ENCODE measurements at regions of chr13 and their contacts with region 1.

Region 1: DNA sequence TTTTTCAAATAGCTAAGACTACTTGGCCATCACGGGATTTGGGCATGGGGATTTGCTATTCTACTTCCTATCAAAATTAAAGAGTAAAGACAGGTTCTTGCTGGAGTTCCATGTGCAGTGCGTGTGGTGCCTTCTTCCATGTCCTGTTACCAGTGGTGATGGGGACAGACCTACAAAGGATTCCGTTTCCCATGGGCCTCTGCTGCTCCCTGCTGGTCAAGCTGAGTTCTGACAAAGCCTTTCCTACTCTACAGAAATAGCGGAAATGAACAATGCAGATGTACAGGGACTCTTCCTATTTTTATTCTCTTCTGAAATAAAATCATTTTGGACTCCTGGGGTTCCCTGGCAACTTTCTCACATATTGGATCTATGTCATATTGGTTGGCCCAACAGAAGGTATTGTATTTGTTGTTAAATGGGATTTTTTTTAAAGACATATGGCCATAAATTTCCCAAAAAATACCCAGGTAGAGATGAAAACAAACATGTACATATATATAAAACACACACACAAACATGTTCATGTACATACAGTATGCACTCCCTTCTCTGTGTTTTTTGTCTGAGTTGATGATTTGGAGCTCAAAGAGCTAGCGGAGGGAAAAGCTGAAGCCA is 90.5 kb upstream of the SLC15A1 start:
- DNase-seq: peak; percentile 20 to 65 (median 48)
- ATAC-seq: peak; percentile 87
- H3K4me3 ChIP-seq: no peak overlapping the region
- H3K4me3 Mint-ChIP-seq: no peak overlapping the region
- H3K27ac ChIP-seq: no peak overlapping the region
- H3K27ac Mint-ChIP-seq: peak overlapping the region in 5 of 9 donors; percentile 13 to 60 (median 46)
- H3K4me1 ChIP-seq: no peaks in the 10 kb centered on the region
- H3K4me1 Mint-ChIP-seq: peaks cover 0 to 12% (median 9%) of the 10 kb centered on the region in 7 donors
- H3K27me3 ChIP-seq: no peaks in the 10 kb centered on the region
- H3K27me3 Mint-ChIP-seq: no peaks in the 10 kb centered on the region

Region 2: GRCh38 chr13:97855570-97856303 is 987.2 kb before region 1 on chr13:
- CTCF ChIA-PET with region 1: no interaction called
- POLR2A ChIA-PET with region 1: no interaction called
- intact Hi-C with region 1: loop called in 1 of 2 experiments (anchors 5 kb)
- DNase-seq: peak in 4 of 9 donors; percentile 6 to 22 (median 16)
- ATAC-seq: peak; percentile 45
- H3K4me3 ChIP-seq: no peak overlapping the region
- H3K4me3 Mint-ChIP-seq: no peak overlapping the region
- H3K27ac ChIP-seq: no peak overlapping the region
- H3K27ac Mint-ChIP-seq: no peak overlapping the region
- H3K4me1 ChIP-seq: no peaks in the 10 kb centered on the region
- H3K4me1 Mint-ChIP-seq: peaks cover 0 to 1% (median 0%) of the 10 kb centered on the region in 7 donors
- H3K27me3 ChIP-seq: no peaks in the 10 kb centered on the region
- H3K27me3 Mint-ChIP-seq: peaks cover 5 to 35% (median 21%) of the 10 kb centered on the region in 5 donors

Region 3: GRCh38 chr13:98445340-98446233 is 397.4 kb before region 1 on chr13:
- CTCF ChIA-PET with region 1: no interaction called
- POLR2A ChIA-PET with region 1: no interaction called
- intact Hi-C with region 1: loop called in 1 of 2 experiments (anchors 1 kb)
- DNase-seq: peak; percentile 59 to 82 (median 73)
- ATAC-seq: peak; percentile 95
- H3K4me3 ChIP-seq: no peak overlapping the region
- H3K4me3 Mint-ChIP-seq: peak overlapping the region in 9 of 10 donors; percentile 8 to 76 (median 68)
- H3K27ac ChIP-seq: peak overlapping the region; percentile 58
- H3K27ac Mint-ChIP-seq: peak overlapping the region; percentile 46 to 92 (median 88)
- H3K4me1 ChIP-seq: peaks cover 10 to 15% of the 10 kb centered on the region in 2 donors
- H3K4me1 Mint-ChIP-seq: peaks cover 0 to 23% (median 14%) of the 10 kb centered on the region in 7 donors
- H3K27me3 ChIP-seq: no peaks in the 10 kb centered on the region
- H3K27me3 Mint-ChIP-seq: no peaks in the 10 kb centered on the region

Region 4: GRCh38 chr13:98672944-98673545 is 169.9 kb before region 1 on chr13:
- CTCF ChIA-PET with region 1: no interaction called
- POLR2A ChIA-PET with region 1: no interaction called
- intact Hi-C with region 1: loop called in 1 of 2 experiments (anchors 1 kb)
- DNase-seq: peak in 8 of 9 donors; percentile 16 to 57 (median 40)
- ATAC-seq: peak; percentile 79
- H3K4me3 ChIP-seq: no peak overlapping the region
- H3K4me3 Mint-ChIP-seq: no peak overlapping the region
- H3K27ac ChIP-seq: no peak overlapping the region
- H3K27ac Mint-ChIP-seq: no peak overlapping the region
- H3K4me1 ChIP-seq: no peaks in the 10 kb centered on the region
- H3K4me1 Mint-ChIP-seq: peaks cover 0 to 8% (median 0%) of the 10 kb centered on the region in 7 donors
- H3K27me3 ChIP-seq: no peaks in the 10 kb centered on the region
- H3K27me3 Mint-ChIP-seq: peaks cover 0 to 11% (median 0%) of the 10 kb centered on the region in 5 donors

Region 5: DNA sequence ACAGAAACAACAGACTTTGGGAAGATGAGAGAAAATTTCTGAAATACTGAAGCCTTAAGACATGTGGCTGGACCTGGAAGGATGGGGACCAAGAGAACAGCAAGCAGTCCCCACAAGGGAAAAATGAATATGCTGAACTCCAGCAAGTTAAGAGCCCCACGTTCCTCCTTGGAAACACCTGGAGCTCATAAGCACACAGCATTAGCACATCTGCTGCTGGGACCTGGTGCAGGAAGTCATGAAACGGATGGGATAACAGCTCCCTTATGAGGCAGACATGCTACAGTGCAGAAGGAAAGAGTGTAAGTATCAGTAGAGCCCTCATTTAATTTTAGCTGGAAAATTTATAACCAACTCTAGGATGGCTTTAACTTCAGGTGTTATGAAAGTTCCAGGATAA is 157.8 kb before region 1 on chr13:
- CTCF ChIA-PET with region 1: no interaction called
- POLR2A ChIA-PET with region 1: no interaction called
- intact Hi-C with region 1: loop called in 1 of 2 experiments (anchors 10 kb)
- DNase-seq: no peak
- ATAC-seq: no peak
- H3K4me3 ChIP-seq: no peak overlapping the region
- H3K4me3 Mint-ChIP-seq: no peak overlapping the region
- H3K27ac ChIP-seq: no peak overlapping the region
- H3K27ac Mint-ChIP-seq: no peak overlapping the region
- H3K4me1 ChIP-seq: no peaks in the 10 kb centered on the region
- H3K4me1 Mint-ChIP-seq: no peaks in the 10 kb centered on the region
- H3K27me3 ChIP-seq: no peaks in the 10 kb centered on the region
- H3K27me3 Mint-ChIP-seq: peaks cover 0 to 20% (median 4%) of the 10 kb centered on the region in 5 donors

Region 6: DNA sequence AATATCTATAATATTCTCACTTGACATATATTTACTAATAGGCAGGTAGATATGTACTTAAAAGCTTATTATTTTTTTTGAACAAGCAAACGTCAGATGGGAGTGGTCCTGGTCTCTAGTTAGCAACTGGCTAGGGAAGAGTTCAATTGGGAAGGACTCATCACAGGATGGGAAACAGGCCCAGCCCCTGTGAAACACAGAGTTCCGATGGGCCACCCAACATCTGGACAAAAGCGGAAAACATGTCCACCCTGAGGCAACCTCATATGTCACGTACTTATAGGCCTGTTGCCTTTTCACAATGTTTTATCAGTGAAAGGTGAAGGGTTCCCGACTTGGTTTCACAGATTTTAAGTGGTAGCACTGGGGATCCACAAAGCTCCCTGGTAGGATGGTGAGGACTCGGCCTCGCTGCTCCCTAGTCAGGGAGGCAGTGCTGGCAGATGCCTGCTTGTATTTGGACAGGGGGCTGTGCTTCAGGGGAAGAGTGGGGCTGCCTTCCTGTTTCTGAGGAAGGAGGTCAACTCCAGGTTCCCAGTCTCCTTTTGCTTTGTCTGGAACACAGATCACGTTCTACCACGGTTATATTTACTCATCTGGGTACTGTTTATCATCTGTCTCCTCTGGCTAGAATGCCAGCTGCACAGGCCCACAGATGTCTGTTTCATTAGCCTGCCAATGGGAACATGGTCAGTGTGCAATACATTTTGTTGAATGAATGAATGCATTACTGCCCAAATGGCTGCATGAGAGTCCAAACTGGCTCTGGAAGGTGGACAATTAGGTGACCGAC is 41.2 kb before region 1 on chr13:
- CTCF ChIA-PET with region 1: no interaction called
- POLR2A ChIA-PET with region 1: no interaction called
- intact Hi-C with region 1: no loop called
- DNase-seq: no peak
- ATAC-seq: no peak
- H3K4me3 ChIP-seq: no peak overlapping the region
- H3K4me3 Mint-ChIP-seq: no peak overlapping the region
- H3K27ac ChIP-seq: no peak overlapping the region
- H3K27ac Mint-ChIP-seq: peak overlapping the region in 1 of 9 donors; percentile 72
- H3K4me1 ChIP-seq: no peaks in the 10 kb centered on the region
- H3K4me1 Mint-ChIP-seq: peaks cover 0 to 7% (median 0%) of the 10 kb centered on the region in 7 donors
- H3K27me3 ChIP-seq: no peaks in the 10 kb centered on the region
- H3K27me3 Mint-ChIP-seq: no peaks in the 10 kb centered on the region

Region 7: GRCh38 chr13:99075268-99076191 is 232.6 kb after region 1 on chr13:
- CTCF ChIA-PET with region 1: interaction called, 7 read pairs
- POLR2A ChIA-PET with region 1: no interaction called
- intact Hi-C with region 1: loop called in 1 of 2 experiments (anchors 1 kb)
- DNase-seq: peak in 7 of 9 donors; percentile 29 to 64 (median 55)
- ATAC-seq: peak; percentile 84
- H3K4me3 ChIP-seq: peak overlapping the region; percentile 11
- H3K4me3 Mint-ChIP-seq: peak overlapping the region; percentile 44 to 82 (median 64)
- H3K27ac ChIP-seq: peak overlapping the region; percentile 54
- H3K27ac Mint-ChIP-seq: peak overlapping the region; percentile 75 to 95 (median 89)
- H3K4me1 ChIP-seq: peaks cover 27 to 39% of the 10 kb centered on the region in 2 donors
- H3K4me1 Mint-ChIP-seq: peaks cover 40 to 92% (median 88%) of the 10 kb centered on the region in 7 donors
- H3K27me3 ChIP-seq: no peaks in the 10 kb centered on the region
- H3K27me3 Mint-ChIP-seq: no peaks in the 10 kb centered on the region

Region 8: DNA sequence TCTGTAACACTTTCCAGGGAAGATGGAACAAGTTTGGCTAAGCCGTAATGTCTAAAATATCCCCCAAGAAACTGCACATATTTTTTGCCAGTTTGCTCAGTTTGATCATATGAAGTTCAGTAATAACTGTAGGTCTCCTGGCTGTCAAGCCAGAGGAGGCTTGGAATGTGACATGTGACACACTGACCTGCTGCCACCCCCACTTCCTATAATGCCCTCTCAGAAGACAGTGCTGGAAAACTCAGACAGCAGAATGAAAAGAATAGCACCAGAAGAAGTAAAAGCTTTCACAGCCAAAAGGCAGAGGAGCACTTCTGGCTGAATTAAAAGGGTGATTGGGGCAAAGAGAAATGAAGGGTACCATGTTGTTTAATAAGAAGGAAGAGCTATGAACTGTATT is 290.3 kb after region 1 on chr13:
- CTCF ChIA-PET with region 1: no interaction called
- POLR2A ChIA-PET with region 1: no interaction called
- intact Hi-C with region 1: loop called in 1 of 2 experiments (anchors 1 kb)
- DNase-seq: no peak
- ATAC-seq: no peak
- H3K4me3 ChIP-seq: no peak overlapping the region
- H3K4me3 Mint-ChIP-seq: no peak overlapping the region
- H3K27ac ChIP-seq: no peak overlapping the region
- H3K27ac Mint-ChIP-seq: peak overlapping the region in 1 of 9 donors; percentile 62
- H3K4me1 ChIP-seq: no peaks in the 10 kb centered on the region
- H3K4me1 Mint-ChIP-seq: no peaks in the 10 kb centered on the region
- H3K27me3 ChIP-seq: no peaks in the 10 kb centered on the region
- H3K27me3 Mint-ChIP-seq: peaks cover 0 to 15% (median 0%) of the 10 kb centered on the region in 5 donors

Region 9: DNA sequence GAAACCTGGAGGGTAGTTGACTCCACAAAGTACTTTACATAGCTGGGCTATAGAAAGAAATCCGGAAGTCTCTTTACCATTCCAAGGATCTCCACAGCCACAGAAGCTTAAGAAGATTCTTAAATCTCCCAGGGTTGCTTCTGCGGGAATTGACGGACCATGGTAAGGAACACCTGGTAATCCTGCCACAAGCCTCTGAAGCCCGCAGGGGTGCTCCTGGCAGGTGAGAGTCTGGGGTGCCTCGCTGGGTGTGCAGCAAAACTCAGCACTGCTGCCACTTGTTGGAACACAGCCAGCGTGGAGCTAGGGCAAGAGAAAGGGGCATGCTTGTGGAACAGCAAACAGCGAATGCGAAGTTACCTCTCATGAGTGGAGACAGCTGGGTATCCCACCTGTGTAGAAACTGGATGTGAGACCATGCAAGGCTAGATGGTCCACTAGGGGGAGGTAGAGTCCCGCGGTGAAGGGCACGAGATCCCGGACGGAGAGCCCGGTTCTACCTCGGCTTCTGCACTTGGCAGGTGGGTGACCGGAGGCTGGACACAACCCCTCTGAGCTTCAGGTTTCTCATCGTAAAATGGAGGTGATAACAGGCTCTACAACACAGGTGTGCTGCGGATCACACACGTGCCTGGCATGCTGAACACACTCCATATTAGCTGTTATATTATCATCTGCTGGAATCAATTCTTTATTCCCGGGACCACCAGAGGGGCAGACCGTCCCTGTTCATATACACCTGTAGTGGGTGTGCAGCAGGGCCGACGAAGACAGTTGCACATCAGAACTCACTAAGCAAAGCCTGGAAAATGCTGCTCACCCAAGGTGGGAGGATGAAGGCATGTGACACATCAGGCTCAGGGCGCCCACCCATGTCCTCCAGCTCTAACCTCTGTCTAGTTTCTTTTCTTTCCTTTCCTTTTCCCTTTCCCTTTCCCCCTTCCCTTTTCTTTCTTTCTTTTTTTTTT is 333.6 kb after region 1 on chr13:
- CTCF ChIA-PET with region 1: no interaction called
- POLR2A ChIA-PET with region 1: no interaction called
- intact Hi-C with region 1: no loop called
- DNase-seq: peak; percentile 54 to 79 (median 71)
- ATAC-seq: peak; percentile 95
- H3K4me3 ChIP-seq: peak overlapping the region; percentile 1
- H3K4me3 Mint-ChIP-seq: peak overlapping the region; percentile 39 to 81 (median 72)
- H3K27ac ChIP-seq: no peak overlapping the region
- H3K27ac Mint-ChIP-seq: peak overlapping the region in 8 of 9 donors; percentile 34 to 77 (median 54)
- H3K4me1 ChIP-seq: peaks cover 22 to 24% of the 10 kb centered on the region in 2 donors
- H3K4me1 Mint-ChIP-seq: peaks cover 26 to 44% (median 39%) of the 10 kb centered on the region in 7 donors
- H3K27me3 ChIP-seq: no peaks in the 10 kb centered on the region
- H3K27me3 Mint-ChIP-seq: peaks cover 0 to 13% (median 0%) of the 10 kb centered on the region in 5 donors